CD8-positive, alpha-beta T cell (primary cell): ENCODE measurements at regions of chr7 and their contacts with region 1.

Region 1: GRCh38 chr7:24819916-24820689 is 62.8 kb upstream of the GSDME start:
- DNase-seq: peak; percentile 30 to 90 (median 74)
- ATAC-seq: peak; percentile 5
- H3K4me3 ChIP-seq: peak overlapping the region in 1 of 2 experiments; percentile 19
- H3K4me3 Mint-ChIP-seq: peak overlapping the region; percentile 74
- H3K27ac ChIP-seq: peak overlapping the region; percentile 52 to 90
- H3K27ac Mint-ChIP-seq: peak overlapping the region; percentile 93
- H3K4me1 ChIP-seq: peaks cover 28% of the 10 kb centered on the region
- H3K4me1 Mint-ChIP-seq: peaks cover 30% of the 10 kb centered on the region
- H3K27me3 ChIP-seq: no peaks in the 10 kb centered on the region
- H3K27me3 Mint-ChIP-seq: no peaks in the 10 kb centered on the region
- CTCF ChIP-seq: peak; percentile 84

Region 2: DNA sequence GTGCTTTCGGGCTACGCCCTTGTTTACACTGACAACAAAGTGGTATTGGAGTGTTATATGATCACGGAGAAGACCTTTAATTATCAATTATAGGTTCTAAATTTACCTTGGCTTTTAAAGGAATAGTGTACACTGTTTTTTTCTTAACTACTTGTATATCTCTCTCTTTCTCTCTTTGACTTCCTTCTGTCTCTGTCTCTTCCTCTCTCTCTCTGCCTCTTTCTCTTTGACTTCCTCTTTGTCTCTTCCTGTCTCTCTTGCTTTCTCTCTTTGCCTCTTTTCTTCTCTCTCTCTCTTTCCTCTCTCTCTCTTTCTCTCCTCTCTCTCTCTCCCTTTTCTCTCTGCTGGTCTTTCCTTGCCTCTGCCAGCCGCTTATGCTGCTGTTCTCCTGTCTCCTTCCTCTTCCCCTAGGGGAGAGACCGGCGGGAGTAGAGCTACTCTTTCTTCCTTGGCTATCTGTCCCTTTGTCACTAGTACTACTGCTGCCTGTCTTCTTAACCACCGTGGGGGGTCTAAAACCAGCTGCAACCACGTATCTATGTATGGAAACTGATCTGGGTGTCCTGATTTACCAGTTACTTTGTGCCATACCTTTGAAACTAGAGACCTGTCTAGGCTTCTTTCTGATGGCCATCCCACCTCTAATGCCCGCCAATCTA is 26.0 kb before region 1 on chr7:
- CTCF ChIA-PET with region 1: no interaction called
- POLR2A ChIA-PET with region 1: no interaction called
- intact Hi-C with region 1: no loop called
- DNase-seq: no peak
- ATAC-seq: no peak
- H3K4me3 ChIP-seq: no peak overlapping the region
- H3K4me3 Mint-ChIP-seq: no peak overlapping the region
- H3K27ac ChIP-seq: no peak overlapping the region
- H3K27ac Mint-ChIP-seq: peak overlapping the region; percentile 42
- H3K4me1 ChIP-seq: peaks cover 4% of the 10 kb centered on the region
- H3K4me1 Mint-ChIP-seq: peaks cover 11% of the 10 kb centered on the region
- H3K27me3 ChIP-seq: no peaks in the 10 kb centered on the region
- H3K27me3 Mint-ChIP-seq: no peaks in the 10 kb centered on the region
- CTCF ChIP-seq: no peak

Region 3: DNA sequence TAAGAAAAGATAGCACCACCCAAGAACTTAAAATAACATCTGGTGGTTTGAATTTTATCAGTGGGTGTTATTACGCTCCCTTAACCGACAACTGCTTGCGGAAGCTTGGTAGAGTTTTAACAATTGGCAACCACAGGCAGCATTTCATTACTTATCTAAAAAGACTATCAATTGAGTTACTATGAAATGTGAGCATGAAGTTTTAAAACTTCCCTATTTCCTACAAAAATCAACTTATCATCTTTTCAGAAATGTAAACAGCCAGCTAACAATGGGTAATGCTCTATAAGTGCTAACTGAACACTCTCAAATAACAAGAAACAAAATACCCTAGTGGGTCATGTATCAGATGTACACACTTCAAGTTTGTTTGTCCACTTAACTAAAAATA is 91.1 kb after region 1 on chr7:
- CTCF ChIA-PET with region 1: interaction called, 5 read pairs
- POLR2A ChIA-PET with region 1: interaction called, 4 read pairs
- intact Hi-C with region 1: loop called (anchors 2 to 5 kb)
- DNase-seq: peak in 4 of 9 experiments; percentile 32 to 75 (median 48)
- ATAC-seq: peak; percentile 65
- H3K4me3 ChIP-seq: no peak overlapping the region
- H3K4me3 Mint-ChIP-seq: peak overlapping the region; percentile 27
- H3K27ac ChIP-seq: peak overlapping the region in 1 of 2 experiments; percentile 70
- H3K27ac Mint-ChIP-seq: peak overlapping the region; percentile 76
- H3K4me1 ChIP-seq: peaks cover 68% of the 10 kb centered on the region
- H3K4me1 Mint-ChIP-seq: peaks cover 54% of the 10 kb centered on the region
- H3K27me3 ChIP-seq: no peaks in the 10 kb centered on the region
- H3K27me3 Mint-ChIP-seq: no peaks in the 10 kb centered on the region
- CTCF ChIP-seq: no peak

Region 4: GRCh38 chr7:25069900-25070443 is 249.9 kb after region 1 on chr7:
- CTCF ChIA-PET with region 1: interaction called, 100 read pairs
- POLR2A ChIA-PET with region 1: interaction called, 4 read pairs
- intact Hi-C with region 1: loop called (anchors 1 kb)
- DNase-seq: peak in 8 of 9 experiments; percentile 7 to 80 (median 47)
- ATAC-seq: peak; percentile 57
- H3K4me3 ChIP-seq: no peak overlapping the region
- H3K4me3 Mint-ChIP-seq: no peak overlapping the region
- H3K27ac ChIP-seq: no peak overlapping the region
- H3K27ac Mint-ChIP-seq: no peak overlapping the region
- H3K4me1 ChIP-seq: no peaks in the 10 kb centered on the region
- H3K4me1 Mint-ChIP-seq: no peaks in the 10 kb centered on the region
- H3K27me3 ChIP-seq: no peaks in the 10 kb centered on the region
- H3K27me3 Mint-ChIP-seq: no peaks in the 10 kb centered on the region
- CTCF ChIP-seq: peak; percentile 88

Region 5: GRCh38 chr7:25098096-25099046 is 278.3 kb after region 1 on chr7:
- CTCF ChIA-PET with region 1: interaction called, 170 read pairs
- POLR2A ChIA-PET with region 1: interaction called, 6 read pairs
- intact Hi-C with region 1: loop called in 1 of 2 experiments (anchors 1 kb)
- DNase-seq: peak; percentile 20 to 81 (median 57)
- ATAC-seq: peak; percentile 85
- H3K4me3 ChIP-seq: no peak overlapping the region
- H3K4me3 Mint-ChIP-seq: no peak overlapping the region
- H3K27ac ChIP-seq: no peak overlapping the region
- H3K27ac Mint-ChIP-seq: no peak overlapping the region
- H3K4me1 ChIP-seq: peaks cover 3% of the 10 kb centered on the region
- H3K4me1 Mint-ChIP-seq: peaks cover 4% of the 10 kb centered on the region
- H3K27me3 ChIP-seq: no peaks in the 10 kb centered on the region
- H3K27me3 Mint-ChIP-seq: peaks cover 2% of the 10 kb centered on the region
- CTCF ChIP-seq: peak; percentile 85

Region 6: GRCh38 chr7:25179771-25180591 is 359.9 kb after region 1 on chr7:
- CTCF ChIA-PET with region 1: no interaction called
- POLR2A ChIA-PET with region 1: no interaction called
- intact Hi-C with region 1: loop called (anchors 5 kb)
- DNase-seq: peak; percentile 92 to 99 (median 95)
- ATAC-seq: peak; percentile 98
- H3K4me3 ChIP-seq: peak overlapping the region; percentile 64 to 70
- H3K4me3 Mint-ChIP-seq: peak overlapping the region; percentile 91
- H3K27ac ChIP-seq: peak overlapping the region; percentile 57 to 83
- H3K27ac Mint-ChIP-seq: peak overlapping the region; percentile 92
- H3K4me1 ChIP-seq: peaks cover 7% of the 10 kb centered on the region
- H3K4me1 Mint-ChIP-seq: peaks cover 22% of the 10 kb centered on the region
- H3K27me3 ChIP-seq: no peaks in the 10 kb centered on the region
- H3K27me3 Mint-ChIP-seq: peaks cover under 1% of the 10 kb centered on the region
- CTCF ChIP-seq: peak; percentile 91